ENCODE measurements at regions of chr10 and their contacts with region 1.

Region 1: DNA sequence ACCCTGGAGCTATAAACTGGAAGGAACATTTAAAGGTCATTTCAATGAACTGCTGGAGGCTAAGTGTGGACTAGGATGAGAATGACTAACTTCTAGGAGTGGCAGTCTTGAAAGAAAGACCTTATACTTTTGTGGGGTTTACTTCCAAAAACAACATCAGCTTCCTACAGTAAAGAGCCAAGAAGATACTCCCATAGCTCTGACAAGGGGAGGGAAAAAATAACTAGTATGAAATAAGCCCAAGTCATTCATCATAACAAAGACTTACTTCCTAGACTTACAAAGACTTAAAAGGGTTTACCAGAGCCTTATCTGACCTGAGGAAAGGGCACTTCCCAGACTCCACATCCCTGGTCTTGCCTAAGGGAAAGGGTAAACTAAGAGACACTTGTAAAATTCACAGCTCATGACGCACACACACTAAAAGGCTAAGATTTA is 31.7 kb downstream of the ARHGAP12 start:
- DNase-seq: peak; percentile 55
- H3K27ac ChIP-seq: no peak overlapping the region
- CTCF ChIP-seq: no peak

Region 2: GRCh38 chr10:31745612-31746376 is 151.2 kb before region 1 on chr10:
- CTCF ChIA-PET with region 1: no interaction called
- POLR2A ChIA-PET with region 1: no interaction called
- DNase-seq: peak; percentile 85
- H3K27ac ChIP-seq: peak overlapping the region; percentile 85
- CTCF ChIP-seq: no peak

Region 3: DNA sequence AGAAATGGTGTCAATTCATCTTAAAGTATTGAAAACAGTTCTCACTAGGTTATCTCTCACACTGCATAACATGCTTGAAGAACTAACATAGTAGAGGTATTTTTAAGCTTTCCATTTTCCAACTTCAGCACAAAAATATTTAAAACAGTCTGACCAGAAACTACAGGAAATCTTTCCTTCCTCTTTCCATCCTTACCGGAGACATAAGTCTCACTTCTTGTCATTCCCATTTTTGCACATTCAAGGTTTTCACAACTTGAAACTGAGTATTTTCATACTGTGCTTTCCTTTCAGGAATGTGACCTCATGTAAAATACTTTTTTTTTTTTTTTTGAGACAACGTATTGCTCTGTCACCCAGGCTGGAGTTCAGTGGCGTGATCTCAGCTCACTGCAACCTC is 13.6 kb before region 1 on chr10:
- CTCF ChIA-PET with region 1: no interaction called
- POLR2A ChIA-PET with region 1: interaction called, 11 read pairs
- DNase-seq: no peak
- H3K27ac ChIP-seq: no peak overlapping the region
- CTCF ChIP-seq: no peak